ENCODE measurements at regions of chr16 and their contacts with region 1.

Region 1: GRCh38 chr16:401468-402348 is at the start of gene DECR2:
- DNase-seq: peak; percentile 99
- ATAC-seq: peak; percentile 93
- H3K4me3 Mint-ChIP-seq: peak within 1 kb of the TSS; percentile 83
- H3K27ac Mint-ChIP-seq: peak within 1 kb of the TSS; percentile 83
- H3K4me1 Mint-ChIP-seq: peaks cover 13% of the 10 kb centered on the region
- H3K27me3 Mint-ChIP-seq: peaks cover under 1% of the 10 kb centered on the region
- CTCF ChIP-seq: peak; percentile 68
- total RNA-seq, gene DECR2: 9.7 to 10.0 TPM

Region 2: GRCh38 chr16:425082-425718 is 23.5 kb after region 1 on chr16 and contains the start of gene RAB11FIP3:
- CTCF ChIA-PET with region 1: interaction called, 11 read pairs
- POLR2A ChIA-PET with region 1: interaction called, 6 read pairs
- intact Hi-C with region 1: no loop called
- DNase-seq: peak; percentile 88
- ATAC-seq: peak; percentile 94
- H3K4me3 Mint-ChIP-seq: peak within 1 kb of the TSS; percentile 79
- H3K27ac Mint-ChIP-seq: peak within 1 kb of the TSS; percentile 84
- H3K4me1 Mint-ChIP-seq: peaks cover 27% of the 10 kb centered on the region
- H3K27me3 Mint-ChIP-seq: no peaks in the 10 kb centered on the region
- CTCF ChIP-seq: no peak
- total RNA-seq, gene RAB11FIP3: 18.7 to 20.4 TPM

Region 3: DNA sequence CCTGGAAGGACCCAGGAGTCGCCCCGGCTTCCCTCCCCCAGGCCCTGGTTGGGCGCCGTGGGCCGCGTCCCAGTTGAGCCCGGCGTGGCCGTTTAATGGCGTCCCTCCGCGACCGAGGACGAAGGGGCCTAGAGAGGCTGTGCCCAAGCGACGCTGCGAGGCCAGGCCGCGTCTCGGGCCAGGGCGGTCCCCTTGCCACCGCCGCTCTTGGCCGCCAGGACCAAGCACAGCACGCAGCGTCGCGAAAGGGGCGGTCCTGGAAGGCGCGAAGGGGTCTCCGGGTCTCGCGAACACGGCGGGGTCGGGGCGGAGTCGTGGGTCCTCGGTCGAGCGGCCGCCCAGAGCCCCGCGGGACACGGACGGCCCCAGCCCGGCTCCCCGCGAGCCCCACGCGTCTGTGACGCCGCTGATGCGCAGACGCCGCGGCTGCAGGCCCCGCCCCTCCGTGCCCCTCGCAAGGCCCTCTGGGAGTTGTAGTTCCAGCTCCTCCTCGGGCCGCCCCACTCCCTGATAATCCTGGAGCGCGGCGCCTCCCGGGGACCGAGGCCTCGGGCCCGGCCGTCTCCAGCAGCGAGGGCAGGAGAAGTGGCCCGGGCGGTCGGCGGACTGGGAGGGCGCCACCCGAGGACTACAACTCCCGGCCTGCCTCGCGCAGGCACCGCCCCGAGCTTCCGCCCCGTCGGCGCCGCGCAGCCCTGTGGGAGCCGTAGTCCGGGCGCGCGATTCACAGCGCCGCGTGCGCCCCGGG is 125.5 kb after region 1 on chr16 and contains the start of gene CAPN15:
- CTCF ChIA-PET with region 1: no interaction called
- POLR2A ChIA-PET with region 1: interaction called, 3 read pairs
- intact Hi-C with region 1: loop called (anchors 5 kb)
- DNase-seq: peak; percentile 84
- ATAC-seq: peak; percentile 76
- H3K4me3 Mint-ChIP-seq: peak within 1 kb of the TSS; percentile 90
- H3K27ac Mint-ChIP-seq: peak within 1 kb of the TSS; percentile 96
- H3K4me1 Mint-ChIP-seq: peaks cover 34% of the 10 kb centered on the region
- H3K27me3 Mint-ChIP-seq: no peaks in the 10 kb centered on the region
- CTCF ChIP-seq: peak; percentile 31
- total RNA-seq, gene CAPN15: 76.4 to 81.2 TPM

Measured in activated CD8-positive, alpha-beta T cell treated with anti-CD3 and anti-CD28 coated beads for 36 hours (primary cell).